Activated naive CD4-positive, alpha-beta T cell treated with anti-CD3 and anti-CD28 coated beads for 36 hours (primary cell): ENCODE measurements at regions of chr7 and their contacts with region 1.

Region 1: GRCh38 chr7:77830649-77831355 is 32.2 kb downstream of the PHTF2 start:
- DNase-seq: no peak
- H3K4me3 Mint-ChIP-seq: no peak overlapping the region
- H3K27ac Mint-ChIP-seq: no peak overlapping the region
- H3K4me1 Mint-ChIP-seq: peaks cover 42% of the 10 kb centered on the region
- H3K27me3 Mint-ChIP-seq: no peaks in the 10 kb centered on the region

Region 2: GRCh38 chr7:77819021-77819420 is 11.8 kb before region 1 on chr7:
- CTCF ChIA-PET with region 1: interaction called, 3 read pairs
- intact Hi-C with region 1: loop called (anchors 2 kb)
- DNase-seq: no peak
- H3K4me3 Mint-ChIP-seq: no peak overlapping the region
- H3K27ac Mint-ChIP-seq: no peak overlapping the region
- H3K4me1 Mint-ChIP-seq: peaks cover 20% of the 10 kb centered on the region
- H3K27me3 Mint-ChIP-seq: no peaks in the 10 kb centered on the region